Heart left ventricle (tissue), 16 donors: ENCODE measurements at regions of chr2 and their contacts with region 1.

Region 1: DNA sequence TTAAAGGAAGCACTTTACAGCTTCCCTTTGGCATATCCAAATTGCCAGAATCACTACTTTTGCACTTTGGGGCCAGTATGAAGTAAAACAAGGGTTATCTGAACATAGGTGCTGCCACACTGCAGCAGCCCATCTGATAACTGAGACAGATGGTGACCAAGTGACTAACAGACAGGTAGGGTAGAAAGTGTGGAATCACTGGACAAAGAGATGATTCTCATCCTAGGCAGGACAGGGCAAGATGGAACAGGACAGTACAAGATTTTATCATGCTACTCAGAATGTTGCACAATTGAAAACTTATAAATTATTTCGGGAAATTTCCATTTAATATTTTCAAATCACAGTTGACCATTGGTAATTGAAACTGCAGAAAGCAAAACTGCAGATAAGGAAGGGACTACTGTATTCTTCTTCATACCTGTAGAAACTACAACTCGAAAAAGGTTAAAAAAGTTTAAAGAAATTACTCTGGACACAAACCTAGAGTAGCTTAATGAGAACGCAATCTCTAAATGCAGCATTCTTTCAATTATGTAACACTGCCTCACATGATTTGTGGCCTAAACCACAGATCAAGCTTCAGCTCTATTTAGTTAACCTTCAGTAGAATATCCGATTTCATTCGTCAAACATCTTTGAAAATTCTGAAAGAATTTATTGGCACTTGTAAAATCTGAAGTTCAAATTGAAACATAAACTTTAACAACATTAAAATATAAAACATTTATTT is 31.4 kb downstream of the HEATR5B start:
- DNase-seq: no peak
- ATAC-seq: no peak
- H3K4me3 ChIP-seq: no peak overlapping the region
- H3K27ac ChIP-seq: no peak overlapping the region
- H3K4me1 ChIP-seq: no peaks in the 10 kb centered on the region
- H3K27me3 ChIP-seq: no peaks in the 10 kb centered on the region
- CTCF ChIP-seq: no peak
- POLR2A ChIP-seq: no peak

Region 2: GRCh38 chr2:36889795-36890194 is 163.0 kb before region 1 on chr2:
- intact Hi-C with region 1: loop called in 1 of 10 experiments (anchors 10 kb)
- DNase-seq: no peak
- ATAC-seq: peak in 2 of 4 donors; percentile 39 to 52
- H3K4me3 ChIP-seq: no peak overlapping the region
- H3K27ac ChIP-seq: no peak overlapping the region
- H3K4me1 ChIP-seq: peaks cover 0 to 6% (median 1%) of the 10 kb centered on the region in 12 donors
- H3K27me3 ChIP-seq: no peaks in the 10 kb centered on the region
- CTCF ChIP-seq: no peak
- POLR2A ChIP-seq: no peak